Motor neuron (in vitro differentiated cells): ENCODE measurements at regions of chr1 and their contacts with region 1.

Region 1: GRCh38 chr1:4801192-4801924 is 146.9 kb downstream of the AJAP1 start:
- ATAC-seq: peak in 1 of 8 experiments; percentile 67
- H3K4me3 ChIP-seq: no peak overlapping the region
- H3K27ac ChIP-seq: no peak overlapping the region
- H3K4me1 ChIP-seq: no peaks in the 10 kb centered on the region

Region 2: GRCh38 chr1:4346141-4346540 is 455.2 kb before region 1 on chr1:
- in situ Hi-C with region 1: no loop called
- ATAC-seq: no peak
- H3K4me3 ChIP-seq: no peak overlapping the region
- H3K27ac ChIP-seq: no peak overlapping the region
- H3K4me1 ChIP-seq: peaks cover 0 to 35% of the 10 kb centered on the region in 2 donors

Region 3: GRCh38 chr1:4652631-4653327 is 148.6 kb before region 1 on chr1:
- in situ Hi-C with region 1: loop called in 1 of 9 experiments (anchors 25 kb)
- ATAC-seq: peak in 7 of 8 experiments; percentile 22 to 86 (median 46)
- H3K4me3 ChIP-seq: no peak overlapping the region
- H3K27ac ChIP-seq: no peak overlapping the region
- H3K4me1 ChIP-seq: peaks cover 6 to 10% of the 10 kb centered on the region in 2 donors

Region 4: DNA sequence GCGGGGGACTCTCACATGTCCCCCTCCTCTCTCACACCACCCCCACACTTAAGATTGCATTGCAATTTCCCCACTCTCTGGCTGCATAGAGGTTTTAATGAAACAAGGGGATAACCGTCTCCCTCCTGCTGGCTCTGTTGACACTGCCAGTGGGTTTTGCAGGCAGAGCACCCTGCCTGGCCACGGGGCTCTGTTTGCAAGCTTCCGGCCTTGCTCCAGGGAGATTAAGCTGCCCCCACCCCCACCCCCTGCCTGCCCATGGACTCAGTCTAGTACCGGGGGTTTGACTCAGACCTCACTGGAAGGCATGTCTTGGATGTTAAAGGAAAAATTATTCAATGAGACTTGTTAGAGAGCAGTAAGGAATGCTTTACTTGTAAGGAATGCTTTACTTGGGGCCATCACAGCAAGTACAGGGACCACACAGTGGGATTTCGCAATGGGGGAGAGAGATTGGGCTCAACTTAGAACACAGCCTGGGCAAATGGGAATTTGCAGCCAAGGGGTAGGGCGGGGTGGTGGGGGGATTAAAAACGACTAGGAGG is 46.0 kb before region 1 on chr1:
- in situ Hi-C with region 1: no loop called
- ATAC-seq: peak in 1 of 8 experiments; percentile 19
- H3K4me3 ChIP-seq: no peak overlapping the region
- H3K27ac ChIP-seq: no peak overlapping the region
- H3K4me1 ChIP-seq: no peaks in the 10 kb centered on the region